ENCODE measurements at regions of chr3 and their contacts with region 1.

Region 1: DNA sequence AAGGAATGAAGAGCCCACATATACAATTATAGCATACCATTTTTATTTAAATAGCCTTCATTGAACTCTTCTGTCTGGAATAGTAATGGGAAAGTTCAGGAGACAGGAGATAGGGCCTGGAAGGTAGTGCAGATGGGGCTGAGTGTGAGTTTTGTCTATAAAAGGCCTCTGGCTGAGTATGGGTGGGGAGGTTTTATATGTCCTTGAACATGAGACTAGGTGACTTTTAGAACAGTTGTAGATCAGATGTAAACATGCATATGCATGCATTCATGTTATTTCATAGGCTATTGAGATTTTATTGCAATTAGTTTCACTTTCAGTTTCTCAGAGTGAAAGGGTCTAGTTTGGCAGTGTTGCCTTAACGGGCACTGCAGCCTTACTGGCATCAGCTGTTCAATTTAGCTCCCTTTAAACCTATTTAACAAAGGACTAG is 27.1 kb downstream of the CGGBP1 start:
- DNase-seq: peak; percentile 77
- H3K4me3 ChIP-seq: peak overlapping the region; percentile 24 to 92 (median 84)
- H3K27ac ChIP-seq: peak overlapping the region; percentile 53
- H3K4me1 ChIP-seq: peaks cover 17% of the 10 kb centered on the region
- H3K27me3 ChIP-seq: no peaks in the 10 kb centered on the region
- CTCF ChIP-seq: no peak
- POLR2A ChIP-seq: no peak

Region 2: GRCh38 chr3:88044411-88044810 is 12.8 kb after region 1 on chr3:
- CTCF ChIA-PET with region 1: interaction called, 10 read pairs
- POLR2A ChIA-PET with region 1: no interaction called
- dilution Hi-C with region 1: no loop called
- intact Hi-C with region 1: no loop called
- DNase-seq: peak; percentile 83
- H3K4me3 ChIP-seq: no peak overlapping the region
- H3K27ac ChIP-seq: peak overlapping the region; percentile 21
- H3K4me1 ChIP-seq: peaks cover 28% of the 10 kb centered on the region
- H3K27me3 ChIP-seq: no peaks in the 10 kb centered on the region
- CTCF ChIP-seq: no peak
- POLR2A ChIP-seq: no peak

Measured in endothelial cell of umbilical vein (primary cell).